WTC11 (cell line): ENCODE measurements at regions of chr11 and their contacts with region 1.

Region 1: GRCh38 chr11:111422494-111423249 is 43.6 kb upstream of the POU2AF1 start:
- DNase-seq: peak; percentile 87
- ATAC-seq: peak; percentile 100
- H3K4me3 Mint-ChIP-seq: no peak overlapping the region
- H3K27ac Mint-ChIP-seq: no peak overlapping the region
- H3K4me1 Mint-ChIP-seq: no peaks in the 10 kb centered on the region
- H3K27me3 Mint-ChIP-seq: no peaks in the 10 kb centered on the region
- CTCF ChIP-seq: peak; percentile 70

Region 2: DNA sequence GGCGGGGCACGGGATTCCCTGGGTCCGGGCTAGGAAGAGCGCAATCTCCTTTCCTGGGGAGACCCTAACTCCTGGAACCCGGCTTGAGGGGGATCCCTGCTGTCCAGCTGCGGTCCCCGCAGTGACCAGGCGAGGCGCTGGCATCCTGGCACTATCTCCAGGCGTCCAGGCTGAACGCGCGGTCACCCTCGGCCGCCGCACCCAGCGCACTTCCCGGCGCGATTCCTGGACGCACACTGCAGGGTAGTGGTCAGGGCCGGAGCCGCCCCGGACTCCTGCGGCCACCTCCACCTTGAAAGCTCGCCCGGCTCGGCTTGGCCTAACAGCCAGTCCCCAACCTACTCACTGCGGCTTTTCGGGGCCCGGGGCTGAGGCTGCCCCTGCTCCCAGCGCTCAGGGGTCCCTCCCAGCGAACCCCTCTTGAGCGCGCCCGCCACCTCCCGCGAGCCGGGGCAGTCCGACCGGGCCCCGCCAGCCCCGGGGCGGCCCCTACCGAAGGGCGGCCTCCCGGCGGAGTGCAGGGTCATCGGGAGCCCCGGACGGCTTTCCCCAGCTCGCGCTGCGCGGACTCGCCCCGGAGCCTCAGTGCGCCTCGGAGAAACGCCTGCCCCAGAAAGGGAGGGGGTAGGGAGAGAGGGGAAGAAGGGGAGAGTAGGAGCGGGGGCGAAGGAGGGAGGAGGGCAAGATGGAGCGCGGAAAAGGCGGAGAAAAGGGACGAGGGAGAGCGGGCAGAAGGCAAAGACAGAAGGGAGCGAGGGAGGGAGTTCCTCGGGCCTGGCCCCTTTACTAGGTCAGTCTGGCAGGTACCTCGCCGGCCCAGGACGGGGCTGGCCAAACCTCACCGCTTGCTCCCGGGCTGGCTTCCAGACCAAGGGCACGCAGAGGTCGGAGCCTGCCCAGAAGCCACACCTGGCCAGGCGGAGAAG is 123.3 kb before region 1 on chr11:
- CTCF ChIA-PET with region 1: interaction called, 25 read pairs
- POLR2A ChIA-PET with region 1: interaction called, 4 read pairs
- DNase-seq: peak; percentile 74
- ATAC-seq: peak; percentile 60
- H3K4me3 Mint-ChIP-seq: peak overlapping the region; percentile 76
- H3K27ac Mint-ChIP-seq: no peak overlapping the region
- H3K4me1 Mint-ChIP-seq: peaks cover 34% of the 10 kb centered on the region
- H3K27me3 Mint-ChIP-seq: peaks cover 26% of the 10 kb centered on the region
- CTCF ChIP-seq: 0 out of 2 replicates have a peak, but pooled peaks have one; percentile 30

Region 3: DNA sequence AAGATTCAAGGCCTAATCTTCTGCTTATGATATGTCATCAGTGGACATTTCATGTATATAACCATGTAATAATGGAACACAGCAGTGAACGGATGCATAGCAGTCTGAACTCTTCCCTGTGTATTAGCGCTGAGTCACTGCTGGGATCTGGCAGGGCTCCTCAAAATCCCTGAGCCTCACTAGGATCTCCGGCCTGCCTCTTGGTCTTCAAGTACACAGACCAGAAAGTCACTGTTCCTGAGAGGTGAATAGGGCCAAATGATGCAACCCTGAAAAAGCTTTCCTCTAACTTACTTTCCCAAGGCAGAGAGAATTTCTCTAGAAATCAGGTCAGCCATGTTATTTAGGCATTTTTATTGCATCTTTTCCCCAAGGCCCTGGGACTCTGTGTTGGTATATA is 78.6 kb before region 1 on chr11:
- CTCF ChIA-PET with region 1: no interaction called
- POLR2A ChIA-PET with region 1: no interaction called
- DNase-seq: no peak
- ATAC-seq: no peak
- H3K4me3 Mint-ChIP-seq: no peak overlapping the region
- H3K27ac Mint-ChIP-seq: peak overlapping the region; percentile 47
- H3K4me1 Mint-ChIP-seq: 0 out of 2 replicates have a peak, but pooled peaks cover 2% of the 10 kb centered on the region
- H3K27me3 Mint-ChIP-seq: no peaks in the 10 kb centered on the region
- CTCF ChIP-seq: no peak

Region 4: DNA sequence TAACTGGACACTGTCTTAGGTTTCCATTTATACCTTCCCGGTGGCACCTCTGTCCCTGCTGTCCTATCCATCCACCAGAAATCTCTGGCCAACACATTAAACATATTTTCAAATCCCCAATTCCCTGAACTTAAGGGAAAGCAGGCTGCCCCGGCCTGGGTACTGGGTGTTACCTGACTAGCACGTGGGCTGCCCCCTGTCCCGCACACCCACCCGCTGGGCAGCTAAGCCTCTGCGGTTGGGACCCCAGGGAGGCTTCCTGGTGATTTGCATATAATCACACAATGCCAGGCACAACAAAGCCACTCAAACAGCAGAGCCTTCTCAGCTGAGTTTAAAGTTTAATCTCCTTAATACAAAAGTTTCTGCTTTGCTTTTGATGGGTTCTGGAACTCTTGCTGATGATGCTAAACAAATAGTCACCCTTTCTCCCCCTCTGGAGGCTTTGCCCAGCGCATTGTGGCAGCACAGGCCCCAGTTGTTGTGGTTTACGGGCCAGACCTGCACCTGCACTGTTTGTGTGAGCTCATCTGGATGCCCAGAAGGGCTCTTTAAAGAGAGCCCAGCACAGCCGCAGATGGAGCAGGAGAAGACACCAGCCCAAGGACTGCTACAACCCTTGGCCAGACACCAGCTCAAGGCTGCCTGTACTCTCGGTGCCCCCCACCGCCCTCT is 16.3 kb after region 1 on chr11:
- CTCF ChIA-PET with region 1: interaction called, 13 read pairs
- POLR2A ChIA-PET with region 1: no interaction called
- DNase-seq: no peak
- ATAC-seq: no peak
- H3K4me3 Mint-ChIP-seq: no peak overlapping the region
- H3K27ac Mint-ChIP-seq: no peak overlapping the region
- H3K4me1 Mint-ChIP-seq: peaks cover 26% of the 10 kb centered on the region
- H3K27me3 Mint-ChIP-seq: no peaks in the 10 kb centered on the region; the same call in 1 of the 2 replicates
- CTCF ChIP-seq: no peak